ENCODE measurements at regions of chr14 and their contacts with region 1.

Region 1: DNA sequence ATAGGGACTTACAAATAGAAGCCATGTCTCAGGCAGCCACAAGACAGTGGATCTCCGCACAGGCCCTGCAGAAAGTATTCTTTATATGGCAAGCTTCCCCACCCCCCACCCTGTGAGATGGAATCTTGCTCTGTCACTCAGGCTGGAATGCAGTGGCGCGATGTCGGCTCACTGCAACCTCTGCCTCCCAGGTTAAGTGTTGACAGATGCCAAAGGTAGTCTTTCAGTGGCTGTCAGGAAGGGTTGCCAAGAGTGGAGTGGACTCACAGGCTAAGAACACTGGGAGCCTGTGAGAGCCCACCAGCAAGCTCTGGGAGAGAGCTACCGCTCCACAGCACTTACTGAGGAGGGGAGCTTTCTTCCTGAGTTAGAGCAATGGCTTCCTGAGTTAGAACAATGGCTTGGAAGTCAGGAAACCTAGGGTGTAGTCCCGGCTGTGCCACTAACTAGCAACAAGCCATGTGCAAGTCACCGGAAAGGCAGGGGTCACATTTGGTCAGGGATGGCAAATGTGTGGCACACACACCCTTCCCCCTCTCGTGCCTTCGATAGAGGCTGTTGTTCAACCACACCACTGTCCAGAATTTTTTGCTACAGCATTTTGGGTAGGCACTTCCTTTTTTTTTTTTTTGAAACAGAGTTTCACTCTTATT is 2.6 kb downstream of the RNASE1 start:
- DNase-seq: peak; percentile 68
- ATAC-seq: peak; percentile 51

Region 2: DNA sequence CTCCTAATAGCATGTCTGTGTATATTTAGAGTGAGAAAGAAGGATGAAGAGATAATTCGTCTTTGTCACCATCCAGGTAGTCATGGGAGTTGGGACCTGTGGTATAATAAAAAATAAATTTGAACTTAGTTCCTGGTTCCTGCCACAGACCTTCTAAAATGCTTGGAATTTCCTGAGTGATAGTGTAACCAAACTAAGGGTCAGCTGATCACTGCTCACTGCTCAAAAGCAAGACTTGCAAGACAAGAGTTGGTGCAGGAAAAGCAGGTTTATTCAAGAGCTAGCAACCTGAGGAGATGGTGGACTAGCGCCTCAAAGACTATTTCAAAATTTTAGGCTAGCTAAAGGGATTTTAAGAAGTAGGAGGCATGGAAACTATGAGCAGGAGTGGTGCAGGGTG is 92.4 kb before region 1 on chr14:
- intact Hi-C with region 1: loop called (anchors 2 kb)
- DNase-seq: no peak
- ATAC-seq: no peak

Region 3: GRCh38 chr14:20757965-20758364 is 42.1 kb before region 1 on chr14:
- intact Hi-C with region 1: loop called (anchors 5 kb)
- DNase-seq: no peak
- ATAC-seq: no peak

Region 4: DNA sequence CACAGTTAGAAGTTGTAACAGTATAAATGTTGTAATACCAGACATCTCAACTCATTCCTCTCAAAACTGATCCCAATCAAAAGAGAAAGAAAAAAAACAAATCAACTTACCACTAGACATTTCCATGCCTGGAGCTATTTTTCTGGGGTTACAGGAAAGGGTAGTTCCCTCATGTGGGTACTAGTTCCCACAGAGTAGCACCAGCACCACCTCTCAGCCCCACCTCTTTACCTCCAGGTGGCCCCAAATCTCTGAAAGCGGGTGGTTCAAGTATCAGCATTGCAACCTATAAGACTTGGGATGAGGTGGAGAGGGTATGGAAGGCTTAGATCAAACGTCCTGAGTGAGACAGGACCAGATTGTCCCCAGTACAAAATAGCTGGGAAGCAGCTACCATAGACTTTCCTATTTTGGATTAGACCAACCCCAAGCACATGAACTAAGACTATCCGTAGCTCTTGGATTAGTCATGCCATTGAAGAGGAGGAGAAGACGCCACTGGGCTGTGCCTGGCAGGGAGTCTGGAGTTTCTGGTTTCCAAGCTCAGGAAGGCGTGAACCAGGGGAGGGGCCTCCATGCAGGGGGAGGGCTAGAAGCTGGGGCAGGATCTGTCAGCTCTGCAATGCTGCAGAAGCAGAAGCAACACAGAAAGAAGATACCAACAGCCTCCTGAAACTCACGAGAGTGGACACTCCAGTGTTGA is 198.8 kb after region 1 on chr14 and contains the start of gene SLC39A2:
- intact Hi-C with region 1: no loop called
- DNase-seq: no peak
- ATAC-seq: no peak
- total RNA-seq, gene SLC39A2: not detected

Measured in Right ventricle myocardium inferior (tissue), 1 donor.